PC-9 (cell line): ENCODE measurements at regions of chr3 and their contacts with region 1.

Region 1: GRCh38 chr3:125310623-125311081 is 64.5 kb downstream of the ZNF148 start:
- DNase-seq: no peak
- H3K4me3 ChIP-seq: no peak overlapping the region
- H3K27ac ChIP-seq: no peak overlapping the region
- H3K4me1 ChIP-seq: no peaks in the 10 kb centered on the region
- H3K27me3 ChIP-seq: no peaks in the 10 kb centered on the region
- CTCF ChIP-seq: no peak

Region 2: DNA sequence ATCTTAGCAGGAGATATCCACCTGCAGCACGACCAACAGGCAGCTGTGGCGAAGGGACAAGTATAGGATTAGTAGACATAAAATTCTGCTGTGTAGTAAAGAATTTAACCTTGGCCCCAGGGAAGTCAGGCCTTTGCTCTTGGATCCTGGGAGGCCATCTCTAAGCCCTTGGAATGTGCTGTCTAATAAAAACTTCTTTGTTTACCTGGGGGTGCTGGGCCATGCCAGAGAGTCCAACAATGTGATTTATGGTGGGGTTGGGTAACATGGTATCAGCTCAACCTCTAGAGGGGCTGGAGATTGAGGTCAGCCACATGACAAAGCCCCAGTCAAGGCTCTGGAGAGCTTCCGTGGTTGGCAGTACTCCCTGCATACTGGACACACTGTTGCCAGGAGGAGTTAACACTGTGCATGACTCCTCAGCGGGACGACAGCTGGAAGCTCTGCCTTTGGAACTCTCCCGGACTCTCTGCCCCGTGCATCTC is 307.2 kb before region 1 on chr3:
- CTCF ChIA-PET with region 1: no interaction called
- POLR2A ChIA-PET with region 1: interaction called, 10 read pairs
- intact Hi-C with region 1: no loop called
- DNase-seq: peak in 1 of 2 experiments; percentile 63
- H3K4me3 ChIP-seq: no peak overlapping the region
- H3K27ac ChIP-seq: no peak overlapping the region
- H3K4me1 ChIP-seq: 0 out of 2 replicates have a peak, but pooled peaks cover 6% of the 10 kb centered on the region
- H3K27me3 ChIP-seq: no peaks in the 10 kb centered on the region
- CTCF ChIP-seq: no peak

Region 3: GRCh38 chr3:125340121-125340520 is 29.5 kb after region 1 on chr3:
- CTCF ChIA-PET with region 1: no interaction called
- POLR2A ChIA-PET with region 1: interaction called, 17 read pairs
- intact Hi-C with region 1: no loop called
- DNase-seq: no peak
- H3K4me3 ChIP-seq: no peak overlapping the region
- H3K27ac ChIP-seq: no peak overlapping the region
- H3K4me1 ChIP-seq: no peaks in the 10 kb centered on the region
- H3K27me3 ChIP-seq: no peaks in the 10 kb centered on the region
- CTCF ChIP-seq: no peak